ENCODE measurements at regions of chr3 and their contacts with region 1.

Region 1: GRCh38 chr3:106183762-106184391 is 315.1 kb upstream of the CBLB start:
- DNase-seq: no peak
- H3K4me3 ChIP-seq: no peak overlapping the region
- H3K27ac ChIP-seq: no peak overlapping the region
- H3K4me1 ChIP-seq: no peaks in the 10 kb centered on the region
- H3K27me3 ChIP-seq: no peaks in the 10 kb centered on the region
- CTCF ChIP-seq: no peak
- POLR2A ChIP-seq: no peak

Region 2: GRCh38 chr3:106058475-106058874 is 125.4 kb before region 1 on chr3:
- intact Hi-C with region 1: loop called (anchors 10 kb)
- DNase-seq: no peak
- H3K4me3 ChIP-seq: no peak overlapping the region
- H3K27ac ChIP-seq: no peak overlapping the region
- H3K4me1 ChIP-seq: no peaks in the 10 kb centered on the region
- H3K27me3 ChIP-seq: no peaks in the 10 kb centered on the region
- CTCF ChIP-seq: no peak
- POLR2A ChIP-seq: no peak

Measured in breast epithelium (tissue), 4 donors.